ENCODE measurements at regions of chr15 and their contacts with region 1.

Region 1: GRCh38 chr15:66386204-66387123 is at the start of gene MAP2K1:
- DNase-seq: peak; percentile 99
- H3K4me3 ChIP-seq: peak within 1 kb of the TSS; percentile 83
- H3K27ac ChIP-seq: peak within 1 kb of the TSS; percentile 83
- H3K4me1 ChIP-seq: peaks cover 40% of the 10 kb centered on the region
- CTCF ChIP-seq: peak; percentile 83
- total RNA-seq, gene MAP2K1: 37.2 and 43.9 TPM in 2 replicates

Region 2: DNA sequence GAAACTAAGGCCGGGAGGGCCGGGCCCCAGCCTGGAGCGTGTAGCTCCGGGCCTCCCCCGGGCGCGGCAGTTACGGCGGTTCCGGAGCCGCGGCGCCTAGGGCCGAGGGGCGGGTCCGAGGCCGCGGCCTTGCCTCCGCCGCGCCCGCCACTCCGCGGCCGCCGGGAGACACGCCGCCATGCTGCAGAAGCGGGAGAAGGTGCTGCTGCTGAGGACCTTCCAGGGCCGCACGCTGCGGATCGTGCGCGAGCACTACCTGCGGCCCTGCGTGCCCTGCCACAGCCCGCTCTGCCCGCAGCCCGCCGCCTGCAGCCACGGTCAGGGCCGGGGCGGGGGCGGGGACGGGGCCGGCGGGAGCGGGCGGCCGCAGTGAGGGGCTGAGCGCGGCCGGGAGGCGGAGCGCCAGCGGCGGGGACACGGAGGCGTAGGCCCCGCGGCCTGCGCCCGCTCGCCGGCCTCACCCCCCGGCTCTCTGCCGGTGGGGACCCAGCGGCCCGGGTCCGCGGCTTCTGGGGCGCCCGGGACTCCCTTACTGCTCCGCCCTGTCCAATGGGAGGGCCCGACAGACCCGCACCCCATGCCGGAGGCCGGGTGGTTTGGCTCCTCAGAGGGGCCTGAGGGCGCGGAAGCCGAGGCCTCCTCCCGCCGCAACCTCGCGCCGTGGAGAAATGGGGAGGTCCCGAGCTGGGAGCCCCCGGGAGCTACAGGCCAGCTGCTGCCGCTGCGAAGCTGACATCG is 92.9 kb before region 1 on chr15 and contains the start of gene DIS3L:
- CTCF ChIA-PET with region 1: no interaction called
- POLR2A ChIA-PET with region 1: no interaction called
- intact Hi-C with region 1: loop called (anchors 1 kb)
- DNase-seq: peak; percentile 87
- H3K4me3 ChIP-seq: peak within 1 kb of the TSS; percentile 69
- H3K27ac ChIP-seq: peak within 1 kb of the TSS; percentile 88
- H3K4me1 ChIP-seq: peaks cover 44% of the 10 kb centered on the region
- CTCF ChIP-seq: no peak
- total RNA-seq, gene DIS3L: 33.9 and 41.2 TPM in 2 replicates

Region 3: GRCh38 chr15:66356345-66357236 is 29.9 kb before region 1 on chr15 and contains the start of gene TIPIN:
- CTCF ChIA-PET with region 1: no interaction called
- POLR2A ChIA-PET with region 1: interaction called, 9 read pairs
- intact Hi-C with region 1: loop called (anchors 1 kb)
- DNase-seq: peak; percentile 99
- H3K4me3 ChIP-seq: peak within 1 kb of the TSS; percentile 87
- H3K27ac ChIP-seq: peak within 1 kb of the TSS; percentile 84
- H3K4me1 ChIP-seq: peaks cover 50% of the 10 kb centered on the region
- CTCF ChIP-seq: no peak
- total RNA-seq, gene TIPIN: 26.0 and 28.6 TPM in 2 replicates

Region 4: DNA sequence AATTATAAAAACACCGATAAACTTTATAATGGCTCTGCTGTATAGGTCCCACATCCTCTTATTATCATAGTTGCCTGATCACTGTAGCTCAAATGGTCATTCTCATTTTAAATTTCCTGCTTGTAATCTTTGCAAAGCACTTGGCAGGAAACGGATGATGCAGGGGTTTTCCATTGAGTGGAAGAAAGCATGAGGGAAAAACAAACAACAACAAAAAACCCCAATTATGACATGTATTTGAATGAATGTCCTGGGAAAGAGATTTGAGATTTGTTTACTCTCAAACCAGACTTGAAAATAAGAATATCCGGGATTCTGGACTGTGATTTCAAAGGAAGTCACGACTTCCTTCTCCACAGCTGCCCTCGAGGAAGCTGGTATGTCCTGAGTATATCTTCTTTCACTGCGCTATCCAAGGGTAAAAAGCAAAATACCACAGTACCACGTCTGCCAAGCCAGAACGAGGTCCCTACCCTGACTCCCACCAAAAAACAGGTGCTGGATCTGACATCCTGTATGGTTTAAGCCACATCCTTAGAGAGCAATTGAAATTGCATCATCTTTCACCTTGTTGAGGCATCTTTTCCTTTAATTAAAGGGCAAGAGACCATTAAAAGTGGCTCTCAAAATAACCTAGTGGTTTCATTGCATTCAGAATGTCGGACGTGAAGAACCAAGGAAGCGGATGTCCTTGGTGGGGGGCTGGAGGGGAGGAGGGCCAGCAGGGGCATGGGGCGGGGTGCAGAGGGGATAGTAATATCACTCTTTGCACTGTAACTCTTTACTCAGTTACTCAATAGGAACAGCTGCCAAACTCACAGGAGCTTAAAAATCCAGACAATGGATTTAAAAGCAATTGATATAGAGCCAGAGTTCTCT is 16.5 kb before region 1 on chr15:
- CTCF ChIA-PET with region 1: no interaction called
- POLR2A ChIA-PET with region 1: interaction called, 7 read pairs
- intact Hi-C with region 1: loop called (anchors 1 kb)
- DNase-seq: peak; percentile 82
- H3K4me3 ChIP-seq: peak overlapping the region; percentile 58
- H3K27ac ChIP-seq: peak overlapping the region; percentile 78
- H3K4me1 ChIP-seq: peaks cover 36% of the 10 kb centered on the region
- CTCF ChIP-seq: no peak

Region 5: GRCh38 chr15:66497502-66498455 is 111.3 kb after region 1 on chr15 and contains the start of gene SNAPC5:
- CTCF ChIA-PET with region 1: interaction called, 3 read pairs
- POLR2A ChIA-PET with region 1: interaction called, 3 read pairs
- intact Hi-C with region 1: loop called (anchors 1 kb)
- DNase-seq: peak; percentile 95
- H3K4me3 ChIP-seq: peak within 1 kb of the TSS; percentile 87
- H3K27ac ChIP-seq: peak within 1 kb of the TSS; percentile 85
- H3K4me1 ChIP-seq: peaks cover 55% of the 10 kb centered on the region
- CTCF ChIP-seq: peak; percentile 99
- total RNA-seq, gene SNAPC5: 30.7 and 32.6 TPM in 2 replicates

Measured in OCI-LY7 (cell line).